ENCODE measurements at regions of chr19 and their contacts with region 1.

Region 1: GRCh38 chr19:33778089-33778791 is 18.4 kb upstream of the KCTD15 start:
- DNase-seq: peak; percentile 75 to 79
- H3K4me3 ChIP-seq: no peak overlapping the region
- H3K27ac ChIP-seq: no peak overlapping the region
- H3K4me1 ChIP-seq: peaks cover 3 to 7% of the 10 kb centered on the region in 2 donors
- H3K27me3 ChIP-seq: no peaks in the 10 kb centered on the region
- CTCF ChIP-seq: peak; percentile 99 to 100 (median 100)
- POLR2A ChIP-seq: no peak

Region 2: DNA sequence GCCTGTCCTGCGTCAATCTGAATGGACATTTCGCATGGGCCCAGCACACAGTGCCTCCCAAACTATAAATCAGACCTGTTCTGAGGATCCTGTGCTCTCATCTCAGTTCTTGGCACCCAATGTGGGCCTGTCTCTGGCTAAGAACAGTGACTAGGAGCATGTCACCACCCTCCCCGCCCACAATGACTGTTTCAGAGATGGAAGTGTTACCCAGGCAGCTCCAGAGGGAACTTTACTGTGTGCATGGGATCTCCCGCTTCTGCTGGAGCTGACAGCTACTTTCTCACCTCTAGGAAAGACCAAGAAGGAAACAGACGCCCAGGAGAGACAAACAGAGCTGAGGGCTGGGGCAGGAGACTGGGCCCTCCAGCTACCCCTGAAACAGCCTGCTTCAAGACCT is 63.4 kb after region 1 on chr19:
- intact Hi-C with region 1: no loop called
- DNase-seq: no peak
- H3K4me3 ChIP-seq: no peak overlapping the region
- H3K27ac ChIP-seq: no peak overlapping the region
- H3K4me1 ChIP-seq: no peaks in the 10 kb centered on the region
- H3K27me3 ChIP-seq: no peaks in the 10 kb centered on the region
- CTCF ChIP-seq: no peak
- POLR2A ChIP-seq: no peak

Region 3: GRCh38 chr19:33998739-33999345 is 220.6 kb after region 1 on chr19:
- intact Hi-C with region 1: loop called (anchors 5 kb)
- DNase-seq: no peak
- H3K4me3 ChIP-seq: no peak overlapping the region
- H3K27ac ChIP-seq: no peak overlapping the region
- H3K4me1 ChIP-seq: no peaks in the 10 kb centered on the region
- H3K27me3 ChIP-seq: no peaks in the 10 kb centered on the region
- CTCF ChIP-seq: peak in 3 of 6 experiments; percentile 35 to 49 (median 48)
- POLR2A ChIP-seq: no peak

Region 4: GRCh38 chr19:34096020-34096915 is 318.0 kb after region 1 on chr19:
- intact Hi-C with region 1: loop called (anchors 5 kb)
- DNase-seq: no peak
- H3K4me3 ChIP-seq: no peak overlapping the region
- H3K27ac ChIP-seq: no peak overlapping the region
- H3K4me1 ChIP-seq: no peaks in the 10 kb centered on the region
- H3K27me3 ChIP-seq: no peaks in the 10 kb centered on the region
- CTCF ChIP-seq: peak in 5 of 6 experiments; percentile 18 to 62 (median 57)
- POLR2A ChIP-seq: no peak

Region 5: DNA sequence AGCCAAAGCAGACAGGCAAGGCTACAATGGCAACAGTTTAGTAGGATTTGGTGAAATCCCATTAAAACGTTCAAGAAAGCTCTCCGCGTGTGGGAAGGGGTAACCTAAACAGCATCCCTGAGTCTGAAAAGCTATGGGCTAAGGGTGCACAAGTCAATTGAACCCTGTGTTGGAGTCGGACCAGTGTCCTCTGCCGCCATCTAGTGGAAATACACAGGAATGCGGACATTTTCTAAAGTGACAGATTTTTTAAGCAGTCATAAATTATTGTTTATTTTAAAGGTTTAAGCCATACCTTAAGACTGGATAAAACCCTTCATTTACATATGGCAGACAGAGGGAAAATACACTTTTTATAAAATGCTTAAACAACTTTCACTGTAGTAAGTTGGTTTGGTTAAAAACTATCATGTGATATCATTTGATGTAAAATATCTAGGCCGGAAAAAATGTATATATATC is 367.5 kb after region 1 on chr19:
- intact Hi-C with region 1: loop called (anchors 10 kb)
- DNase-seq: peak; percentile 23 to 27
- H3K4me3 ChIP-seq: no peak overlapping the region
- H3K27ac ChIP-seq: no peak overlapping the region
- H3K4me1 ChIP-seq: no peaks in the 10 kb centered on the region
- H3K27me3 ChIP-seq: no peaks in the 10 kb centered on the region
- CTCF ChIP-seq: peak; percentile 53 to 85 (median 74)
- POLR2A ChIP-seq: no peak

Region 6: DNA sequence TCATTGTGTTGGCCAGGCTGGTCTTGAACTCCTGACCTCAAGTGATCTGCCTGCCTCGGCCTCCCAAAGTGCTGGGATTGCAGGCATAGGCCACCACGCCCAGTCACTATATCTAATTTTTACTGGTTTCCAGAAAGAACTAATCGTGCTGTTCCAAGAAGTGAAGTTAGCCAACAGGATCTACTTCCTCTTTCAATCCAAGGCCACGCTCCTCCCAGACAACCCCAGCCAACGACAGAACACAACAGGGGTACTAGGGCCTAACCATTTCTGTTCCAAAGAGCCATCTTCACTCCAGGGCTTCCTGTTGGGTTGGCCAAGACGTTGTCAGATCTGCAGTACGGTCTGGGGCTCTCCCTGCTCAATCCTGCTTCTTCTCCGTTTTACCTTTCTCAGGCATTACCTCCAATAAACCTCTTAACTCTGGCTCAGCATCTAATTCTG is 387.1 kb after region 1 on chr19:
- intact Hi-C with region 1: no loop called
- DNase-seq: no peak
- H3K4me3 ChIP-seq: no peak overlapping the region
- H3K27ac ChIP-seq: no peak overlapping the region
- H3K4me1 ChIP-seq: no peaks in the 10 kb centered on the region
- H3K27me3 ChIP-seq: no peaks in the 10 kb centered on the region
- CTCF ChIP-seq: no peak
- POLR2A ChIP-seq: no peak

Measured in thyroid gland (tissue), 4 donors.